ENCODE measurements at regions of chr1 and their contacts with region 1.

Region 1: DNA sequence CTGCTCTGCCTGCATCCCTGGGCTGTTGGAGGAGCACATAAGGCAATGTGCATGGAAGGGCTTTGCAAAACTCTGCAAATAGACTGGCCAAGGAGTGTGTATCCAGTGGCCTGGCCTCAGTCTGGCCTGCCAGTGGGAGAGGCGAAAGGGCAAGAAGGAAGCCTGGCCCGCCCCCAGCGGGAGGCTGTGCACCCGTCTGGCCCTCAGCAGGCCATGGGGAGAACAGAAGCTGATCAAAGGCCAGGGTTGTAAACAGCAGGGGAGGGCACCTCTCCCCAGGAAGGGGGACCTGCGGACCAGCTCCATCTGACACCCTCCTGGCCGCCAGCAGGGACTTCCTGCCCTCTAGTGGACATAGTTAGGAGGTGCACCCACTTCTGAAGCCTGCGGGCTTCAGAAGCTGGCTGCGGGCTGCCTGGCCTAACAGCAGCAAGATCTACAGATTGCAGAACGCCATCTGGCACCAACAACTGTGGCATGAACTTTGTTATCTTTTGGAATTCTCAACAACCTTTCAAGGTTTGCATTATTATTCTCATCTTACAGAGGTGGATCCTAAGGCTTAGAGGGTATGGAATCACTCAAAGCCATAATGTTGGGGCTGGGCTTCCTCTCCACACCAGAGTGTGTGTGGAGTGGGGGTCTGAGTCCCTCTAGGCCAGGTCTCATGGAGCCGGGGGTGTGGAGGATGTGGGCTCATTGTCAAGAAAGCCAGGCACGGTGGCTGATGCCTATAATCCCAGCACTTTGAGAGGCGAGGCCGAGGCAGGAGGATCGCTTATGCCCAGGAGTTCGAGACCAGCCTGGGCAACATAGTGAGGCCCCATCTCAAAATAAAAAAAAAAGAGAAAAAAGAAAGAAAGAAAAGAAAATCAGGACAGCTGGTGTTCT is 18.9 kb upstream of the CDK18 start:
- DNase-seq: peak; percentile 92
- H3K4me3 ChIP-seq: peak overlapping the region in 1 of 2 experiments; percentile 22; a peak in 1 of 4 replicates
- H3K27ac ChIP-seq: no peak overlapping the region
- H3K4me1 ChIP-seq: peaks cover 0 to 3% of the 10 kb centered on the region in 2 experiments; a peak in 2 of 4 replicates
- H3K27me3 ChIP-seq: peaks cover 16% of the 10 kb centered on the region; the same call in 1 of the 2 replicates
- CTCF ChIP-seq: peak; percentile 93
- EP300 ChIP-seq: no peak; a peak in 1 of 4 replicates
- RAD21 ChIP-seq: peak; percentile 91

Region 2: DNA sequence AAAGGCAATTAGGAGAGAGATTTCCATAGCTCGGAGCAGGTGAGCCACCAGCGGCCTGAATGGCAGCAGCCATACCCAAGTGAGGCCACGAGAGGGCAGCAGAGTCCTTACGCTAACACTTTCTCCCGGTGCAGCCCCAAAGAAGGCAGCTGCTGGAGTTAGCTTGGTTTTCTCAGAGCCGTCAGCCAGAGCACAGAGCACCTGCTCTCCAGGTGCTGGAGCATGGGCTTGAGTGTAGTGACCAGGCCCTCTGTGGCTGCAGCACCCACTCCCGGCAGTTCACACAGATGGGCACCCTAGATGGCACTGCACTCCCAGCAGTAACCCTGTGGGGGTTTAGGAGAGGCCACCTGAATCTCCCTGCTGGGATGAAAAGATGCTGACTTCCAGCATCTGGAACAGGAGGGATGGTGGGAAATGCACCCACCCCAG is 212.0 kb before region 1 on chr1:
- CTCF ChIA-PET with region 1: interaction called, 13 read pairs
- POLR2A ChIA-PET with region 1: no interaction called
- DNase-seq: peak; percentile 91
- H3K4me3 ChIP-seq: no peak overlapping the region; a peak in 1 of 4 replicates
- H3K27ac ChIP-seq: no peak overlapping the region
- H3K4me1 ChIP-seq: peaks cover 3 to 10% of the 10 kb centered on the region in 2 experiments; a peak in 3 of 4 replicates
- H3K27me3 ChIP-seq: no peaks in the 10 kb centered on the region
- CTCF ChIP-seq: peak; percentile 95
- EP300 ChIP-seq: no peak
- RAD21 ChIP-seq: peak; percentile 97

Region 3: DNA sequence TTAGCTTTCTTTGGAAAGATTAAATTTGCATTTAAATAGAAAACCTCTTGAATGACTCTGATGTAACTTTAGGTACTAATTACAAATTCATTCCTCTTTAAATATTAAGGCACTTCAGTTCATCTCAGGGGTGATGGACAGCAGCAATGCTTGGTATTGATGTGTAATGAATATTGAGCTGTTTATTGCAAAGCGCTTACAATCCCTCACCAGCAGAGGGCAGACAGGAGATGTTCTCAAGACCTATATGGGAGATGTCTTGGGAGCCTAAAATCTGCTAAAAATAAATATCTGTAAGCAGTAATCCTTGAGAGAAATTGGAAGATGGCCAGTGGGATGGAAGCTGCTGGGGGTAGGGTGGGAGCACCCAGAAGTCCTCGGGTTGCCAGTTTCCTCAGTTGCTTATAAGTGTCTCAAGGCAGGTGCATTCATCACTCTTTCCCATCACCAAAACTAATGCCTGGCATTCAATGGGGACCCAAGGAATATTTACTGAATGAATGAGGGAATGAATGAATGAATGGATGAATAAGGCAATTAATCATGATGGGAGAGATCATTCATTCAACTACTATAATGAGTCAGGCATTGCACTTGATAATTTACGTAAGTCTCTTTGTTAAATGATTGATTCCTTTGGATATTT is 131.2 kb before region 1 on chr1:
- CTCF ChIA-PET with region 1: interaction called, 84 read pairs
- POLR2A ChIA-PET with region 1: no interaction called
- DNase-seq: peak; percentile 56
- H3K4me3 ChIP-seq: no peak overlapping the region
- H3K27ac ChIP-seq: no peak overlapping the region
- H3K4me1 ChIP-seq: peaks cover 0 to 8% of the 10 kb centered on the region in 2 experiments; a peak in 1 of 4 replicates
- H3K27me3 ChIP-seq: no peaks in the 10 kb centered on the region; the same call in 1 of the 2 replicates
- CTCF ChIP-seq: peak; percentile 96
- EP300 ChIP-seq: no peak
- RAD21 ChIP-seq: peak; percentile 67

Region 4: DNA sequence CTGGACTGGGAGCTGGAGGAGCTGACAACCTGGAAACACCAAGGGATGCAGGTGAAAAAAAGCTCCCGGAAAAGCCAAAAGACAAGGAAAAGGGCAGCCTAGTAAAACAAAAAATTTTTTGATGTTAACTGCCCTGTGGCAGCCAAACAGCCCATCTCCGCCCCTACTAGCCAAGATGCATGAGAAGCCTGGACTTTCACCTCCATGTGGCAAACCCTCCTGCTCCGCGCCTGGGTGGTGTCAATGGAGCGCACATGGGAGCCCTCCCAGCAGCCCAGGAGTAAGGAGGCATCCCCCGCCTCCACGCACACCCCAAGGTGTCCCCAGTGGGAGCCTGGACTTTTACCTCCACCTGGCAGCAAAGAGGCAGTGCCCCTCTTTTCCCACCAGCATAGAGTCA is 94.2 kb before region 1 on chr1:
- CTCF ChIA-PET with region 1: interaction called, 190 read pairs
- POLR2A ChIA-PET with region 1: no interaction called
- DNase-seq: no peak
- H3K4me3 ChIP-seq: no peak overlapping the region
- H3K27ac ChIP-seq: no peak overlapping the region
- H3K4me1 ChIP-seq: no peaks in the 10 kb centered on the region; a peak in 1 of 4 replicates
- H3K27me3 ChIP-seq: no peaks in the 10 kb centered on the region; the same call in 1 of the 2 replicates
- CTCF ChIP-seq: no peak
- EP300 ChIP-seq: no peak
- RAD21 ChIP-seq: no peak

Region 5: GRCh38 chr1:205422993-205423625 is 62.5 kb before region 1 on chr1:
- CTCF ChIA-PET with region 1: interaction called, 49 read pairs
- POLR2A ChIA-PET with region 1: no interaction called
- DNase-seq: no peak
- H3K4me3 ChIP-seq: no peak overlapping the region
- H3K27ac ChIP-seq: no peak overlapping the region
- H3K4me1 ChIP-seq: peaks cover 0 to 11% of the 10 kb centered on the region in 2 experiments; a peak in 2 of 4 replicates
- H3K27me3 ChIP-seq: peaks cover 34% of the 10 kb centered on the region
- CTCF ChIP-seq: no peak
- EP300 ChIP-seq: no peak
- RAD21 ChIP-seq: peak; percentile 22; the same call in 1 of the 2 replicates

Region 6: DNA sequence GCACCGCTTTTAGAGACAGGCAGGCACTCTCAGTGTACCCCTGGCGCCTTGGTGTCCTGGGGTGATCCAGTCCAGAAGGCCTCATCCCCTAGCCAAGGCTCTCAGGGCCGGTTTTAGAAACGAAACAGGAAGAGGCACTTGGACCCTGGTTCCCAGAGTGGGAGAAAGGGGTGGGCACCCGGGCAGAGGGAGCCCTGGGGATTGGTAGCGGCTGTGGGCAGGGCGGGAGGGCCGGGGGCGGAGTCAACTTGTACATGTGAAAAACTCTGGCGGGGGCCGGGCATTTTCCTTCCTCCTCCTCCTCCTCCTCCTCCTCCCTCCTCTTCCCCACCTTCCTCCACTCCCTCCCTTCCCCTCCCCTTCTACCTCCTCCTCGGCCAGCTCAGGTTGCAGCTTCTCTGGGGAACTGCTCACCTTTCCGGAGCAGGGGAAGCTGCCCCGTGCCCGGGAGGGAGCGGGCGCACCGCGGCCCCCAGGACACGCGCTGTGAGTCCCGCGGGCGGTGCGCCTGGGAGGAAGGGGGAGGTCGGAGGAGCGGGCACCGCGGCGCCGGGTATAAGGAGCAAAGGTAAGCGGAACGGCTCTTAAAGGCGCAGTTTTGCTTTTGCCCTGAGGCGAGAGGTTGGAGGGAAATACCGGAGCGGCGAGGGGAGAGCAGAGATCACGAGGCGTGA is 18.9 kb after region 1 on chr1 and contains the start of gene CDK18:
- CTCF ChIA-PET with region 1: interaction called, 141 read pairs
- POLR2A ChIA-PET with region 1: no interaction called
- DNase-seq: peak; percentile 88
- H3K4me3 ChIP-seq: peak within 1 kb of the TSS; percentile 57 to 69
- H3K27ac ChIP-seq: no peak within 1 kb of the TSS; a peak in 1 of 4 replicates
- H3K4me1 ChIP-seq: peaks cover 7 to 54% of the 10 kb centered on the region in 2 experiments; a peak in 3 of 4 replicates
- H3K27me3 ChIP-seq: no peaks in the 10 kb centered on the region
- CTCF ChIP-seq: no peak
- EP300 ChIP-seq: no peak
- RAD21 ChIP-seq: no peak
- polyA plus RNA-seq, gene CDK18: 2.5 and 3.1 TPM in 2 replicates

Region 7: DNA sequence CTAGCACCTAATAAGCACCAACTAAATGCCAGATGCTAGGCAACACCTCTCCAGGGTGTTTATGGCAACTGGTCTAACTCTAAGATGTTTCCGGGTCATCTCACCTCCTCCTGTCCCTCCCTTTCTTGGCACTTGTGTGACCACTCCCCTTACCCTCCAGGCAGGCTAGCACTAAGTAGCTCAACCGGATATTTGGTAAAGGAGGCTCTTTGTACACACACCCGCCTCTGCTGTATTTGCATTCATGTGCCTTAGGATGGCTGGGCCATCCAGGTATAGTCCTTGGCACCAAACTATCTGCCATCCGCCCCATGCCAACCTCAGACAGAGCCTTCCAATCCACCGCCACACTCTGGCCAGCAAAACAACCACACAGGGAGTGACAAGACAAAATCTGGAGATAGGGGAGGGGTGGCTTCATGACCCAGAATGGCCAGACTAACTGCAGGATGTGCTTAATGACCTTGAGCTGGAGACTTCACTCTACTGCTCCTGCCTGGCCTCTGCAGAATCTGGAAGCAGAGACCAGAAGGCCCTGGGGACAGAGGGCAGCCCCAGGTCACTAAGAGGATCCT is 78.4 kb after region 1 on chr1:
- CTCF ChIA-PET with region 1: no interaction called
- POLR2A ChIA-PET with region 1: no interaction called
- DNase-seq: no peak
- H3K4me3 ChIP-seq: no peak overlapping the region
- H3K27ac ChIP-seq: no peak overlapping the region
- H3K4me1 ChIP-seq: peaks cover 0 to under 1% of the 10 kb centered on the region in 2 experiments; a peak in 1 of 4 replicates
- H3K27me3 ChIP-seq: peaks cover 31% of the 10 kb centered on the region
- CTCF ChIP-seq: no peak
- EP300 ChIP-seq: no peak
- RAD21 ChIP-seq: no peak

Region 8: DNA sequence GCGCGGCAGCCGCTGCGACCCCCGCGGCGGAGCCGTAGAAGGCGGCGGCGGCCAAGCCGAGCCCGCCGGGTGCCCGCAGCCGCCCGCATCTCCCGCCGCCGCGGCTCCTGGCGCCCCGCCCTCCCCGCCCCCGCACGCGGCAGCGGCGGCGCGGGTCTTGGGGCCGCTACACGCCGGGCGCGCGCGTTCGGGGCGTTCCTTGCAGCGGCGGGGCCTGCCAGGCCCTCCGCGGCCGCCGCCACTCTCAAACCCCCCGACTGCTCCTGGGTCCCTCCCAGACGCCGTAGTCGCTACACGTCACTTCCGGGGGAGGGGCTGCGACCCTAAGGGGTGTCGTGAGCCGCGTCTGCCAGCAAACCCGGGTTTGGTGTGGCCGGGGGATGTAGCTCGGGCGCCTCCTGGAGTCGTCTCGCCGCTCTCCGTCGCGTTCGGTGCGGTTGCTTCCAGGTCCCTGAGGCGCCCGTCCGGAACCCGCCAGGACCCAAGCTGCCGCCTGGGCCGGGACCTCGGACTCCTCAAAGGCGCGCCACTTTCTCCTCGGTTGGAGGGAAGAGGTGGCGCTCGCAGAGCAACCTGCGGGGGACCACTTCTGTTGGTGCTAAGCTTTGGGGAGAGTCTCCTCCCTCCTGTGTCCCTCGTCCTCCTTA is 146.3 kb after region 1 on chr1 and contains the start of gene ELK4:
- CTCF ChIA-PET with region 1: interaction called, 13 read pairs
- POLR2A ChIA-PET with region 1: no interaction called
- DNase-seq: peak; percentile 98
- H3K4me3 ChIP-seq: peak within 1 kb of the TSS; percentile 77 to 83
- H3K27ac ChIP-seq: peak within 1 kb of the TSS; percentile 95
- H3K4me1 ChIP-seq: peaks cover 0 to 9% of the 10 kb centered on the region in 2 experiments; a peak in 2 of 4 replicates
- H3K27me3 ChIP-seq: no peaks in the 10 kb centered on the region
- CTCF ChIP-seq: peak; percentile 73
- EP300 ChIP-seq: peak in 1 of 2 experiments; percentile 36; a peak in 1 of 4 replicates
- RAD21 ChIP-seq: peak; percentile 77
- polyA plus RNA-seq, gene ELK4: 2.6 and 3.8 TPM in 2 replicates

Measured in SK-N-SH (cell line).